ENCODE measurements at regions of chr19 and their contacts with region 1.

Region 1: GRCh38 chr19:12657966-12658365 is 8.6 kb downstream of the MAN2B1 start:
- DNase-seq: no peak
- H3K4me3 ChIP-seq: no peak overlapping the region
- H3K27ac ChIP-seq: no peak overlapping the region
- H3K4me1 ChIP-seq: no peaks in the 10 kb centered on the region
- H3K27me3 ChIP-seq: no peaks in the 10 kb centered on the region

Region 2: GRCh38 chr19:12670159-12670928 is 12.4 kb after region 1 on chr19:
- CTCF ChIA-PET with region 1: interaction called, 11 read pairs
- POLR2A ChIA-PET with region 1: interaction called, 4 read pairs
- DNase-seq: no peak
- H3K4me3 ChIP-seq: peak overlapping the region; percentile 83 to 98 (median 96)
- H3K27ac ChIP-seq: peak overlapping the region; percentile 100
- H3K4me1 ChIP-seq: peaks cover 4 to 46% (median 37%) of the 10 kb centered on the region in 4 experiments
- H3K27me3 ChIP-seq: no peaks in the 10 kb centered on the region

Region 3: DNA sequence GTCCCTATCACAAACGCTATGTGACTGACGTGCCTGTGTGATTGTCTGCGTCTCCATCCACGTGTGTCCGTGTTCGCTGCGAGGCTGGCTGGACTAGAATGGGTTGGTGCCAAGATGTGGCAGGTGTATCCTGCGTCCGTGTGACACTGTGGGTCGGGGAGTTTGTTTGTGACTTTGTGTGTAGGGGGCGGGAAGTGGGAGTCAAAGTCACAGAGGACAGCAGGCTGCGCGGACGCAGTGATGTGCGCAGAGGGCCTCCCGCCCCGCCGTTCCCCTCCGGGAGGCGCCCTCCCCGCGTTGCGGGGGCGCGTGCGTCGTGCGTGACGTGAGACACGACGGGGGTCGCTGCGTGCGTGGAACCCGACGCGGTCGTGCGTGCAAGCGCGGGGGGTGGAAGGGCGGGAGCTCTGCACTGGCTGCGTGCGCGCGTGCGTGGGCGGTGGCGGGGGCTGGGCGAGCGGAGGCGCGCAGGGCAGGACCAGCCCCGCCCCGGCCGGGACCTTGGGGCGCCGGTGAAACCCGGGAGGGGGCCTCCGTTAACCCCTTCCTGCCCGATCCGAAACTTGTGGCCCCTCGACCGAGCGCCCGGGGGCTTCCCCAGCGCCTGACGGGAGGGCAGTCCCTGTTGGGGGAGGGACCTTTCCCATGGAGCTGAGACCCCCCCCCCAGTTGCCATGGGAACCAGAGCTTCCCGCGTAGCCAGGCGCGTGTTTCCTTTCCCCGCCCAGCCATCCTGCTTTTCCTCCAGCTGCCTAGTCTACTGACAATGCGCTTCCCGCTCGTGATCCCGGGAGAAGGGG is 124.5 kb after region 1 on chr19:
- CTCF ChIA-PET with region 1: no interaction called
- POLR2A ChIA-PET with region 1: no interaction called
- DNase-seq: peak; percentile 74 to 93 (median 88)
- H3K4me3 ChIP-seq: peak overlapping the region; percentile 39 to 81 (median 65)
- H3K27ac ChIP-seq: peak overlapping the region; percentile 77 to 85
- H3K4me1 ChIP-seq: peaks cover 27 to 88% (median 86%) of the 10 kb centered on the region in 4 experiments
- H3K27me3 ChIP-seq: no peaks in the 10 kb centered on the region

Measured in common myeloid progenitor, CD34-positive (primary cell).